Ascending aorta (tissue), 2 donors: ENCODE measurements at regions of chrX and their contacts with region 1.

Region 1: GRCh38 chrX:154397819-154398724 is at the start of gene RPL10:
- DNase-seq: peak; percentile 83 to 97
- H3K4me3 ChIP-seq: peak within 1 kb of the TSS; percentile 56 to 91
- H3K27ac ChIP-seq: peak within 1 kb of the TSS; percentile 94 to 97
- H3K4me1 ChIP-seq: peaks cover 0 to 9% of the 10 kb centered on the region in 2 donors
- H3K27me3 ChIP-seq: no peaks in the 10 kb centered on the region
- CTCF ChIP-seq: no peak
- total RNA-seq, gene RPL10: 4,298 TPM

Region 2: DNA sequence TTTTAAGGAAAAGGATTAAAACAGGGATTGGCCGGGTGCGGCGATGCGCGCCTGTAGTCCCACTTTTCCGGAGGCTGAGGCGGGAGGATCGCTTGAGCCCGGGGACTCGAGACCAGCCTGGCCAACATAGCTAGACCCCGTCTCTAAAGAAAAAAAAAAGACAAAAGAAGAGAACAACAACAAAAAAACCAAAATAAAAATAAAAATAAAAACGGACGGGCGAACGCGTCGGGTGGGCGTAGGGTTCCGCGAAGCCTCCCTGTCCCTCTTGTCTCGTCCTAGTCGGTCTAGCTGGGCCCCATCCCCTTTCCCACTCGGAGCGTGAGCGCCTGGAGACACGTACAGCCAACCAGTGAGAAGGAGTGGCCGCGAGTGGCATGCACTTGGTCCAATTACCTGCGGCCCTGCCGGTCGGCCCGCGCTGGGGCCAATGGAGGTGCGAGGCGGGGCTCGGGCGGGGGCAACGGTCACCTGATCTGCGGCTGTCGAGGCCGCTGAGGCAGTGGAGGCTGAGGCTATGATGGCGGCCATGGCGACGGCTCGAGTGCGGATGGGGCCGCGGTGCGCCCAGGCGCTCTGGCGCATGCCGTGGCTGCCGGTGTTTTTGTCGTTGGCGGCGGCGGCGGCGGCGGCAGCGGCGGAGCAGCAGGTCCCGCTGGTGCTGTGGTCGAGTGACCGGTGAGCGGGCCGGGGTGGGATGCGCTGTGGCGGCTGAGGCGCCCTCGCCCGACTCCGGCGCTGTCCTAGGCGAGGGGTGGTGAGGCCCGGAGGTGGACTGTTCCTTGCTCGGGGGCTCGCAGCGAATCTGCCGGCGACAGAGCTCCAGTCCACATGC is 30.3 kb after region 1 on chrX and contains the start of gene ATP6AP1:
- intact Hi-C with region 1: no loop called
- DNase-seq: peak; percentile 78 to 95
- H3K4me3 ChIP-seq: peak within 1 kb of the TSS; percentile 43 to 86
- H3K27ac ChIP-seq: peak within 1 kb of the TSS; percentile 59 to 83
- H3K4me1 ChIP-seq: peaks cover 2 to 8% of the 10 kb centered on the region in 2 donors
- H3K27me3 ChIP-seq: no peaks in the 10 kb centered on the region
- CTCF ChIP-seq: no peak
- total RNA-seq, gene ATP6AP1: 52.6 TPM

Region 3: DNA sequence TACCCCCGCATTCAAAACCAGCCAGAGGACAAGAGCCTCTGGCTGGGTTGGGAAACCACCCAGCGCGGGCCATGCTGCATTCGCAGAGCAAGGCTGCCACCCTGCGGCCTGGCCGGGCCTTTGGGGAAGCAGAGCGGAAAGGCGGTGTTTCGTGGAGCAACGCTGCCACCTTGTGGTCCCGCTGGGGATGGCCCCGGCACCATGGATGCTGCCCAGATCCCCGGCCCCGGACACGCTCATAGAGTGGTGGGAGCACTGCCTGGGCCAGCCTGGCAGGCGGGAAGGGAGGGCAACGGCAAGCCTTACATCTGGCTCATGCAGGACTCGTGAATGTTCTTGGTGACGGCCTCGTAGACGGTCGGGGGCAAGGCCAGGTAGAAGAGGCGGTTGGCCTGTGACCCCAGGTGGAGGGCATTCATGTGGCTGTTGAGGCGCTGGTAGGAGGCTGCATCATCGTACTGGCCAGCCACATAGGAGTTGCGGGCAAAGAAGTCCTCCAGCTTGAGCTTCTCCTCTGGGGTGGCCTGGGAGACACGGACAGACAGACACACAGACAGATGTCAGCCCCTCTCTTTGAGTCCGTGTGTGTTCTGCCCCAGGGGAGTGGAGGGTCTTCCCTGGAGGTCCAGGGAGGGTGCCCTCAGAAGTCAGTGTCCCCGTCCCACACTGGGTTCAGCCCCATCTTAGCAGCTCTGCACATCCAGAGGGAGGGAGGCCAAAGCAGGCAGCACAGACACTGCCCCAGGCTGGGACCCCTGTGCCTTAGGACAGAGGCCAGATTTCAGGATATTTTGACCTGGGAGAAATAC is 137.0 kb after region 1 on chrX:
- intact Hi-C with region 1: loop called (anchors 1 kb)
- DNase-seq: peak in 1 of 2 donors; percentile 92
- H3K4me3 ChIP-seq: no peak overlapping the region
- H3K27ac ChIP-seq: no peak overlapping the region
- H3K4me1 ChIP-seq: peaks cover 0 to 3% of the 10 kb centered on the region in 2 donors
- H3K27me3 ChIP-seq: no peaks in the 10 kb centered on the region
- CTCF ChIP-seq: peak; percentile 96 to 100 (median 99)

Region 4: DNA sequence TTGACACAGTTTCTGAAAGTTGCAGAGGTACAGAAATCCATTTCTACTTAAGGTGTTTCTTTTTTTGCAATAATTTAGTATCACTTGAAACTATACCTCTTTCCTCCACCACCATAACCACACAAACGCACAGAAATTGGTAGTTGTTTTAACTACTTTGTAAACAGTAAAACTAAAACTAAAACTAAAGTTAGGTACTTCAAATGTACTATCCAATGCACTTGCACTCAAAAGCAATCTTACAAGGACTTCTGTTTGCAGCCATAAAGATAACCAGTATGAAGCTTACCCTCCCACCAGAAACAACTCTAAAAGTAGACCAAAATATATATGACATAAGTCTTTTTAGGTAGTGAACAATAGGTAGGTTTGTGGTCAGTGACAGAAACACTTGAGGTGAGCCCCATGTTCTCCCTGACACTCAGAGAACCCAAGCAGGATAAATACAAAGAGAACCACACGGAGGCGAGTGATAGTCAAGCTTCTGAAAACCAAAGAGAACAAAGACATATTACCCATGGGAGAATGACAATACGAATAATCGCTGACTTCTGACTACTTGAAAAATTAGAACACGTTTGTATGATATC is 746.0 kb after region 1 on chrX:
- intact Hi-C with region 1: no loop called
- DNase-seq: no peak
- H3K4me3 ChIP-seq: no peak overlapping the region
- H3K27ac ChIP-seq: no peak overlapping the region
- H3K4me1 ChIP-seq: no peaks in the 10 kb centered on the region
- H3K27me3 ChIP-seq: no peaks in the 10 kb centered on the region
- CTCF ChIP-seq: no peak